Activated CD4-positive, alpha-beta T cell treated with anti-CD3 and anti-CD28 coated beads for 36 hours (primary cell): ENCODE measurements at regions of chr3 and their contacts with region 1.

Region 1: GRCh38 chr3:120908030-120908794 is at the start of gene STXBP5L:
- DNase-seq: peak; percentile 83
- ATAC-seq: peak; percentile 97
- H3K4me3 Mint-ChIP-seq: peak within 1 kb of the TSS; percentile 69
- H3K27ac Mint-ChIP-seq: no peak within 1 kb of the TSS
- H3K4me1 Mint-ChIP-seq: peaks cover 16% of the 10 kb centered on the region
- H3K27me3 Mint-ChIP-seq: peaks cover 46% of the 10 kb centered on the region
- total RNA-seq, gene STXBP5L: not detected

Region 2: DNA sequence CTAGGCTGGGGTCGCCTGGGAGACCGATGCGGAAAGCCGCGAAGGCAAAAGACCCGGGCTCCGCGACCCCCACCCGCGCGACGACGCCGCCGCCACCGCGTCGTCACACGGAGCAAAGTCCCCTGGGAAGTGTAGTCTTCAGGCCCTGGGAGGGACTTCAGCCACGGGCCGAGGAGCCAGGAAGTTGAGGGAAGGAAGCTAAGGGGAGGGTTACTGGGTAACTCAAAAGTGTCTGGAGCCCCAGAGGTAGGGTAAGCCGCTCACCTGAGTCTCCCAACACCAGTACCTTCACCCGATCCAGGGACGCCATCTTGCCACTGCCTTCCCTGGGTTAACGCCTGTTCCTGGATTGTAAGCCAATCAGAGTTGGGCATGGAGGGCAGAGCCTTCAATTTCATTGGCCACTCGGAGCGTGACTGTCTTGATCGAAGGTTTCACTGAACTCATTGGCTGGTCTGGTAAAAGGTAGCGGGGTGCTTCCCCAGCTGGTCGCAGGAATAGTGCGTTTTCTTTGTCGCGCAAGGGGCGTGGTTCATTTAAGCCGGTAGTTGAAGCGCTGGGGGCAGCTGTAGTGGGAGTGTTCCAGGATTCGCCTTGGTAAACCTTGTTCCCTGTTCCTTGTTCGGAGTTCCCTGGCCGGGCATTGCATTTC is 165.9 kb before region 1 on chr3 and contains the starts of genes GTF2E1 and RABL3:
- CTCF ChIA-PET with region 1: no interaction called
- POLR2A ChIA-PET with region 1: no interaction called
- intact Hi-C with region 1: loop called in 1 of 2 experiments (anchors 1 kb)
- DNase-seq: peak; percentile 96
- ATAC-seq: peak; percentile 99
- H3K4me3 Mint-ChIP-seq: peak within 1 kb of the TSS; percentile 98
- H3K27ac Mint-ChIP-seq: peak within 1 kb of the TSS; percentile 95
- H3K4me1 Mint-ChIP-seq: peaks cover 28% of the 10 kb centered on the region
- H3K27me3 Mint-ChIP-seq: no peaks in the 10 kb centered on the region
- total RNA-seq, gene GTF2E1: 26.1 to 27.0 TPM
- total RNA-seq, gene RABL3: 35.5 to 37.8 TPM